AG04450 (cell line): ENCODE measurements at regions of chr10 and their contacts with region 1.

Region 1: GRCh38 chr10:96229568-96230030 is 41.8 kb downstream of the BLNK start:
- DNase-seq: peak; percentile 20
- H3K4me3 ChIP-seq: no peak overlapping the region
- H3K27ac ChIP-seq: no peak overlapping the region
- H3K27me3 ChIP-seq: no peaks in the 10 kb centered on the region
- CTCF ChIP-seq: peak; percentile 78

Region 2: GRCh38 chr10:96208271-96208670 is 21.3 kb before region 1 on chr10:
- CTCF ChIA-PET with region 1: interaction called, 11 read pairs
- POLR2A ChIA-PET with region 1: no interaction called
- DNase-seq: no peak
- H3K4me3 ChIP-seq: no peak overlapping the region
- H3K27ac ChIP-seq: no peak overlapping the region
- H3K27me3 ChIP-seq: peaks cover 3% of the 10 kb centered on the region
- CTCF ChIP-seq: no peak

Region 3: DNA sequence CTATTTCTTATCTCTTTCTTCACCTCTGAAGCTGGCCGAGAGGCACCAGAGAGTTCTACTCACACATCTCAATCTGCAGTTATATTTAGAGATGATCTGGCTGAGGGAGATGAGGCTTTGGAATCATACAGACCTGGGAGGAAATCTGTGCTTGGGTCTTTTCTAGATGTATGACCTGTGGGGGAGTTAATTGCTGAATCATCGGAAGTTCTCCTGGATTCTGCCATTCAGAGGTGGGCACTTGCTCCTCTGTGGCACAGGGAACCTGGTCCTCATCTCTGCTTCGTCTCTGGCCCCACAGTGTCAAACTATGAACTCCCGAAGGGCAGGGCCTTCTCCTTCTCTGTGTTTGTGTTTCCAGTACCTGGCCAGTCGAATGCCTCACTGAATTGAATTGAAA is 10.8 kb before region 1 on chr10:
- CTCF ChIA-PET with region 1: interaction called, 13 read pairs
- POLR2A ChIA-PET with region 1: no interaction called
- DNase-seq: no peak
- H3K4me3 ChIP-seq: no peak overlapping the region
- H3K27ac ChIP-seq: no peak overlapping the region
- H3K27me3 ChIP-seq: no peaks in the 10 kb centered on the region
- CTCF ChIP-seq: no peak

Region 4: DNA sequence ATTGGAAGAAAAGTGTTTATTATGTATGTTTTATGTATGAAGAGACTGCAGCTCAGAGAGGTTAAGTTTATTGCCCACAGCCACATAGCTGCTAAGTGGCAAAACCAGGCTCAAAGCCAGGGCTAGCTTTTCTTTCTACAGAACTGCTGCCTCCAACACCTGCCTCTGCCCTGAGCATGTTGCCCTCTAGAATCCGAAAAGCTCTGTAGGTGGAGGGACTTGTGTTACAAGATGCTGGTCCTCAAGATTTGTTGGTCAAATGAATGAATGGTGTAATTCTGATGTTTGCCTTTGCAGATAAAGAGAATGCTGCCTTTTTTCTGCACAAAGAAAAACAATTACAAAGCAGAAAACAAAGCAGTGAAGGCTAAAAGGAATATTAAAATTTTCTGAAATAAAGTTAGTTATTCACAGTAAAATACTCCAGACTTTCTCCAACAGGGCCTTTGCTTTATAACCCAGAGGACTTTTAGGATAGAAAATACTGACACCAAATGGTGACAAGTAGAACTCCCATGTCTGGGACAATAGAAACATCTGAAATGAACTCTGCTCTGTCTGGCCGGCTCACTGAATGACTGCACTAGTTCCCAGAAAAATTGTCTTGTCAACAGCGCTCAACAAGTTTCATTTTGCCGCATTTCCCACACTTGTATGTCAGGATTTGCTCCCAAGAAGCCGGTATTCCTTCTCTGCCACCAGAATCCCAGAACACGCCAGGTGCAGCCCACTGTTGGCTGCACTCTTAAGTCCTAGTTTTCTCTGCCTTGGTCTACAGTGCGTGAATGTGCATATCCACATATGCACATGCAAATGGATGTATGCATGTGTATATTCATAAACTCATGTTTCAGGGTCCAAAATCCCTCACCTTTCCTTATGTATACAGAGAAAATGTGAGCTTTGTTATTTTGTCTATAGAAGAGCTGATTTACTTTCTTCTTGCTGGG is 63.6 kb after region 1 on chr10:
- CTCF ChIA-PET with region 1: interaction called, 14 read pairs
- POLR2A ChIA-PET with region 1: no interaction called
- DNase-seq: peak; percentile 1
- H3K4me3 ChIP-seq: no peak overlapping the region
- H3K27ac ChIP-seq: no peak overlapping the region
- H3K27me3 ChIP-seq: peaks cover 3% of the 10 kb centered on the region
- CTCF ChIP-seq: peak; percentile 54

Region 5: DNA sequence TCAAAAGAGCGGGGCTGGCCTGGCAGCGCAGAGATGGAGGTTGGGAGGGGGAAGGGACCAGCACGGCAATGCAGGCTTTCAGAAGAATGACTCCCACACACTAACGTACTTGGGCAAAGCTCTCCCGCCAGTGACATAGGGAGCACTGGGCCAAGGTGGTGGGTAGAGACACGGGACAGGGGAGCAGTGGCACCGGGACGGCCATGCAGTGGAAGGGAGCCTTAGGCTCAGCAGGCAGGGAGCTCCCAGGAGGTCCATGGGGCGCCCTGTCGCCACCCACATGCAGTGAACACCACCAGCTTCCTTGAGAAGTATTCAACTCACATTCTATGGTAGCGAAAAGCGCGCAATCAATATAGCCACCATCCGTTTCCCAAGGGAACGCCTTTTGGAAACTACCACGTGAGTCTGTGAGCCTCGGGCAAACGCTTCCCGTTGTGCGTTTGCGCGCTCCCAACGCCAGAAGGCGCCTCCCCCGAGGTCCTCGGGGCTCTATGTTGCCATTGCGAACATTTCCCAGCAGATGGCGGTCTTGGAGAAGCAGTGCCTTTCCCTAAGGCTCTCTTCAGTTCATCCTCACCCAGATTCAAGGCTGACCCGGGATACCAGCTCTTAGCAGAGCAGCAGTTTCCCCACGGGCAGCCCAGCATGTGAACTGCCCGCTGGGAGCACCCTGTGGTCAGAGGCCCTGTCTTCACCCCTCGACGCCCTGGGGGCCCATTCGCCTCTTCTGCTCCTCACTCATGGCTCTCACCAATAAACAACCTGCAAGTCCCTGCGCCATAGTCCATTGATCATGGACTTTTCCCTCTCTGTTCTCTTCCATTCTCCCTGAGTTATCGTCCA is 145.6 kb after region 1 on chr10:
- CTCF ChIA-PET with region 1: no interaction called
- POLR2A ChIA-PET with region 1: no interaction called
- DNase-seq: peak; percentile 46
- H3K4me3 ChIP-seq: peak overlapping the region; percentile 53
- H3K27ac ChIP-seq: no peak overlapping the region
- H3K27me3 ChIP-seq: peaks cover 12% of the 10 kb centered on the region
- CTCF ChIP-seq: peak; percentile 95

Region 6: DNA sequence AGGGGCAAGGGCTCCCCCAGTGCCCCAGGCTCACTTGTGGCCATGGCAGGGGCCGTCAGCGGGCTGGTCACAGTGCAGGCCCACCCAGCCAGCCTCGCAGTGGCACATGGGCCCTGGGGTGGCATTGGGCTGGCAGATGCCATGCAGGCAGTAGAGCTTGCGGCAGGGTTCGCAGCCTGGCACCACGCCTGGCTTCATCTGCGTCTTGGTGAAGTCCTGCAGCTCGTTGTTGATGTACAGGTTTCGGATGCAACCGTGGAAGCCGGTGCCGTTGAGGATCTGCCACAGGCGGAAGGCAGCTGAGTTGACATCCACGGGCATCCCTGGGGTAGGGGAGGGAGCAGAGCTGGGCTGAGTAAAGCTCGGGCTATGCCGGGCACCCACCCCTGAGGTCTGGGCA is 773.1 kb after region 1 on chr10:
- CTCF ChIA-PET with region 1: interaction called, 14 read pairs
- POLR2A ChIA-PET with region 1: no interaction called
- DNase-seq: no peak
- H3K4me3 ChIP-seq: no peak overlapping the region
- H3K27ac ChIP-seq: no peak overlapping the region
- H3K27me3 ChIP-seq: peaks cover 6% of the 10 kb centered on the region
- CTCF ChIP-seq: no peak